PC-3 (cell line): ENCODE measurements at regions of chr5 and their contacts with region 1.

Region 1: DNA sequence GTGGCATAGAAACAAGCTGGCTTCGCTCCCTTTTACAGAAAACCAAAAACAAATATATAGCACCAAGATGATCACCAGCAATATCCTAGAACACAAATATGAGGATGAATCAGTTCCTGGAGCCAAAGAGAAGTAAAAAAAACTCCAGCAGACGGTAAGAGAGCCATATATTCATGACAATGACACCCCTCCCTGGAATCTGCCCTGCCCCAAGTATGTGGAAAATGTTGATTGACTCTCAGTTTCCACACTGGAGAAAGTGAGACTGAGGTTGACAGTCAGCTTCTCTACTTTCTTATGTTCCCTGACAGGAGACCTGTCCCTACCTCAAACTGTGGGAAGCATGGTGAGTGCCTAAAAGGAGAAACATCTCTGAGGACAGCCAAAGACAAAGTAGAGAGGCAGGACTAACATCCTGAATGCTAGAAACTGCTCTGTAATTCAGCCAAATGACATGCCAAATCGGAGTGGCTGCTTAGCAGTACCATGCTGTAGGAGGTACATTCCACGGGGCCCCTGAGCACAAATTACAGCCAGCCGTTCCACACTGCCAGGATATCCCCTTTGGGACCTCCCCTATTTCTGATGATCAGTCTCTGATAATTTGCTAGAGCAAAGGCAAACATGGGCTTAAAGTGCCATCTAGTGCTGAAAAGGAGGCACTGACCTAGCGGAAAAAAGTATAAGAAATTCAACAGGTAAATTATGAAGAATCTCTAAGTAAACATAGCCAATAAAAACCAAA is 424.0 kb upstream of the RGMB start:
- DNase-seq: peak; percentile 94
- ATAC-seq: peak; percentile 94
- H3K4me3 ChIP-seq: peak overlapping the region; percentile 34; the same call in 1 of the 2 replicates
- H3K27ac ChIP-seq: peak overlapping the region; percentile 90
- H3K4me1 ChIP-seq: peaks cover 5% of the 10 kb centered on the region; the same call in 1 of the 2 replicates
- H3K27me3 ChIP-seq: no peaks in the 10 kb centered on the region
- CTCF ChIP-seq: peak; percentile 99

Region 2: DNA sequence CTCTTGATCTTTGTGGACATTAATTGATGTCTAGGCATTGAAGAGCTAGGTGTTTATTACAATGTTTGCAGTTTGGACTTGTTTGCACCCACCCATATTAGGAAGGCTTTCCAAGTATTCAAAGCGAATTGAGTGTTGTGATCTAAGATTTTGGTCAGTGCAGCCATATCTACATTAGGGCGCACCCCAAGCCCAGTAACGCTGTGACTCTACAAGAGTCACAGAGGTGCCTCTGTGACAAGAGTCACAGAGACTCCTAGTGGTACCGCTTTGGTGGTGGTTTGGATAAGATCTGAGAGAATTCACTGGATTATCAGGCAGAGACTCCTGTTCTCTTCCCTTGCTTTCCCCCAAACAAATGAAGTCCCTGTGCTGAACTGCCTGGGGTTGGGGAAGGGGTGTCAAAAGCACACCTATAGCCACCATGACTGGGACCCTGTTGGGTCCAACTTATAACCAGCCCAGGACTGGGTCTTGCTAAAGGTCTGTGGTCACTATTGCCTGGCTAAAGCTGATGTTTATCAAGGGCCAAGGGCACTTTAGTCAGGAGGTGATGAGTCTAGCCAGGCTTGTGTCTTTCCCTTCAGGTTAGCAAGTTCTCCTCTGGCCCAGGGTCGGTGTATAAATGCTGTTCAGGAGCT is 1052.2 kb before region 1 on chr5:
- CTCF ChIA-PET with region 1: no interaction called
- POLR2A ChIA-PET with region 1: no interaction called
- intact Hi-C with region 1: loop called (anchors 1 kb)
- DNase-seq: peak; percentile 72
- ATAC-seq: peak; percentile 85
- H3K4me3 ChIP-seq: no peak overlapping the region
- H3K27ac ChIP-seq: no peak overlapping the region
- H3K4me1 ChIP-seq: no peaks in the 10 kb centered on the region
- H3K27me3 ChIP-seq: no peaks in the 10 kb centered on the region
- CTCF ChIP-seq: peak; percentile 76

Region 3: DNA sequence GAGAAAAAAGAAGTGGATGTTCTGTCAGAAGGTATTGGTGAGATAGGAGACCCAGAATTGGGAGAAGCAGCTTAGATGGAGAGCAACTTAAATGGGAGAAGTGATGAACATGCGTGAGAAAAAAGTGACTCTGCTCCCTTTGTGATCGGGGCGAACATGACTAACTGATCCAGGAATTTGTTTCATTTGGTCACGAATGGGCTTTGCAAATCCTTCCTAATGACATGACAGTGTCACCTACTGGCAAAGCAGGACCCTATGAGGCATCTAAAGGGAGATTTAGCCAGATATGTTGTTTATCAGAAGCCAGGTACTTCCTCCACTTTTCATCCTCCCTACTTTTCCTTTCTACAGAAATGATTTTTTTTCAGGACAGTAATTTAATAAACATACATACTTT is 363.4 kb before region 1 on chr5:
- CTCF ChIA-PET with region 1: no interaction called
- POLR2A ChIA-PET with region 1: no interaction called
- intact Hi-C with region 1: loop called (anchors 5 kb)
- DNase-seq: peak; percentile 85
- ATAC-seq: peak; percentile 87
- H3K4me3 ChIP-seq: no peak overlapping the region
- H3K27ac ChIP-seq: peak overlapping the region; percentile 16
- H3K4me1 ChIP-seq: peaks cover 10% of the 10 kb centered on the region; the same call in 1 of the 2 replicates
- H3K27me3 ChIP-seq: no peaks in the 10 kb centered on the region
- CTCF ChIP-seq: peak; percentile 68

Region 4: DNA sequence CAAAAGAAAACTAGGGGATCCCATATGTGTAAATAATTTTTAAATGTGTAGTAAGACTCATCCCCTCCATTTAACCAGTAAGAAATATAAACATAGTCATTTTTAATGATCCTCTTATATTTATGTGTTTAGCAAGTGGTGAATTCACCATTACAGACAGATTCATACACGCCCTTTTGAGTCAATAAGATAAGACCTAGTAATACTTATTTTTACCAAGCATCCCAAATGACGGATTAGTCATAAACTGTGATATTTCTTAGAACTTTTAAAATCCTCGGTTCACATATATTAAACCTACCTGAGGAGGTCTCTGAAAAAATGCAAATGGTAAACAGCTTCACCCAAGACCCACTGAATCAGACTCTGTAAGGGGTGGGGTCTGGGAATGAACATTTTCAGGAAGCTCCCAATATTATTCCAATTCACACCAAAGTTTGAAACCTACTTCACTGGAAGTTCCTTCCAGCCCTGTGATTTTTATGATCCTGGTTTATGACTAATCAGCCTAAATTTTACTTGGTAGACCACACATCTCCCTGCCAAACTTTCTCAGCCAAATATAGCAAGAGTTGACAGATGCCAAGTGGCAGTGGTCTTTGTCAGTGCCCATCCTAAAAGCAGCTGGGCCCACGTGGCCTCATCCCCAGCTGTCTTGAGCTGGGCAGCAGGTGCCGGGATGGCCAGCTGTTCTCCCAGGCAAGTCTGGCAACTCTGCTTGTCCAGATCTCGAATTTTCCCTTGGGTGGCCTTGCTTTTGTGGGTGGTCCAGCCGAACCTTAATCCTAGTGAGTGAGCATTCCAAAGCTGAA is 135.0 kb before region 1 on chr5:
- CTCF ChIA-PET with region 1: no interaction called
- POLR2A ChIA-PET with region 1: no interaction called
- intact Hi-C with region 1: loop called (anchors 10 kb)
- DNase-seq: peak; percentile 94
- ATAC-seq: peak; percentile 92
- H3K4me3 ChIP-seq: 0 out of 2 replicates have a peak overlapping the region, but pooled peaks have one; percentile 5
- H3K27ac ChIP-seq: peak overlapping the region; percentile 79
- H3K4me1 ChIP-seq: peaks cover 22% of the 10 kb centered on the region
- H3K27me3 ChIP-seq: no peaks in the 10 kb centered on the region
- CTCF ChIP-seq: no peak